Activated CD4-positive, alpha-beta T cell treated with anti-CD3 and anti-CD28 coated beads for 36 hours (primary cell): ENCODE measurements at regions of chr9 and their contacts with region 1.

Region 1: GRCh38 chr9:128927731-128928411 is 7.1 kb downstream of the PHYHD1 start:
- DNase-seq: peak; percentile 73
- ATAC-seq: peak; percentile 81
- H3K4me3 Mint-ChIP-seq: no peak overlapping the region
- H3K27ac Mint-ChIP-seq: peak overlapping the region; percentile 6
- H3K4me1 Mint-ChIP-seq: peaks cover 9% of the 10 kb centered on the region
- H3K27me3 Mint-ChIP-seq: no peaks in the 10 kb centered on the region

Region 2: DNA sequence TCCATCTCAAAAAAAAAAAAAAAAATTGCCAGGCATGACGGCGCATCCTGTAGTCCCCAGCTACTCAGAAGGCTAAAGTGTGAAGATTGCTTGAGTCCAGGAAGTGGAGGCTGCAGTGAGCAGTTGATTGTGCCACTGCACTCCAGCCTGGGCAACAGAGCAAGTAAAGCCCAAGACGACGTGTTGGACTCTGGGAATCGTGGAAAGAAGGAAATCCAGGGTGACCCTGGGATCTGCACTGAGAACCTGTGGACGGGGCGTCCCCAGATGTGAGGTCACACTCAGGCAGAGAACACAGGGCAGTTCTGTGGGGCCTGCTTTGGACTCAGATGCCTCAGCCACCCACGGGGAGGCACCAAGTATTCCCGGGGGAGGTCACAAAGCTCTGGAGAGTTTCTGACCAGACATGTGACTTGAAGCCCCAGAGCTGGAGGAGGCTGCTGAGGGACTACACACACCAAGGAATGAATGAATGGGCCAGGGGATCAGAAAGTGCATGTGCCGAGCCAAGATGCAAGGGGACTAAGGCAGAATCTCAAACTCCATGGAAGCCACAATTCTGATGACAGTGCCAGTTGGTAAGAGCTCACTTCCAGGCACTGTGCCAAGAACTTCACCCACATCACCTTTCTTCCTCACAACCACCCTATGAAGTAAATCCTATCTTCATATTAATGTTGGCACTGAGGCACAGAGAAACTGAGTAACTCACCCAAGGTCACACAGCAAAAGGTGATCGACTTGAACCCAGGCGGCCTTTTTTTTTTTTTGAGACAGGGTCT is 284.2 kb before region 1 on chr9:
- CTCF ChIA-PET with region 1: interaction called, 3 read pairs
- POLR2A ChIA-PET with region 1: no interaction called
- intact Hi-C with region 1: loop called (anchors 1 to 5 kb)
- DNase-seq: no peak
- ATAC-seq: no peak
- H3K4me3 Mint-ChIP-seq: no peak overlapping the region
- H3K27ac Mint-ChIP-seq: no peak overlapping the region
- H3K4me1 Mint-ChIP-seq: no peaks in the 10 kb centered on the region
- H3K27me3 Mint-ChIP-seq: no peaks in the 10 kb centered on the region

Region 3: DNA sequence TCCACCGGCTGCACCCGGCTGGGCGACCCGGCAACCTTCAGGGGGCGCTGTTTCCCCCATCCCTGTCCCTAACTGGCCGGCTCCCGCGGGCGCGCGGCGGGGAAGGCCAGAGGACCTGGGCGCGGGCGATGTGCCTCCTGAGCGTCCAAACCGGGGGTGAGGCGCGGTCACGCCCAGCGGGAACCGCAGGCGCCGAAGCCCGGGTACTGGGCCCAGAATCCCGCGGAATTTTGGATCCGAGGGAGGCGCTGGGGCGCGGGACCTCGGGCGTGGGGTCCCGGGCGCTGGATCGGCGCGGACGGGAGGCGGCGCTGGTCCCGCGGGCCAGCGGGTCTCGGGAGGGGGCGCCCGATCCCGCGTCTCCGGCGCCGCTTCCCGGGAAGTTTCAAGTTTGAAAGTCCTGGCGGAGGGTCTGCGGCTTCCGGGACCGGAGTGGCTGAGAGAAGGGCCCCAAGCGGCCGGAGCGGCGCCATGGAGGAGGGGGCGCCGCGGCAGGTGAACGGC is 225.4 kb before region 1 on chr9 and contains the start of gene PKN3:
- CTCF ChIA-PET with region 1: interaction called, 3 read pairs
- POLR2A ChIA-PET with region 1: no interaction called
- intact Hi-C with region 1: loop called in 1 of 2 experiments (anchors 2 kb)
- DNase-seq: peak; percentile 95
- ATAC-seq: peak; percentile 85
- H3K4me3 Mint-ChIP-seq: peak within 1 kb of the TSS; percentile 73
- H3K27ac Mint-ChIP-seq: peak within 1 kb of the TSS; percentile 74
- H3K4me1 Mint-ChIP-seq: peaks cover 10% of the 10 kb centered on the region
- H3K27me3 Mint-ChIP-seq: no peaks in the 10 kb centered on the region
- total RNA-seq, gene PKN3: 14.6 to 14.9 TPM

Region 4: DNA sequence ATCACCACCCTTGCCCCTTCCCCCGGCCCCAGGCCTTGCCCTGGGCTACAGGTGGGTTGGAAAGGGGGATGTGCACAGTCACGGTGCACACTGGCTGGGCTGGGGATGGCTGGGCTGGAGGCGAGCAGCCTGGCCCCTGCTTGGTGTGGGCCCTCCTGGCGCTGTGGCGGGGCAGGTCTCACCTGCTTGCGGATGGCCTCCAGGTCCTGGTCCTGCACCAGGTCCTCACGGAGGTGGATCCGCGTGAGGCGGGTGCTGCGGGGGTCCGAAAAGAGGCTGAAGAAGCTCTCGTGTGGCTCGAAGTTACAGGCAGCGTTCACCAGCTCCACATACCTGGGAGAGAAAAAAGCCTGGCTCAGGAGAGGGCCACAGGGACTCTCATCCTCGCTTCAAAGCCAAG is 174.2 kb before region 1 on chr9:
- CTCF ChIA-PET with region 1: no interaction called
- POLR2A ChIA-PET with region 1: no interaction called
- intact Hi-C with region 1: no loop called
- DNase-seq: no peak
- ATAC-seq: no peak
- H3K4me3 Mint-ChIP-seq: no peak overlapping the region
- H3K27ac Mint-ChIP-seq: no peak overlapping the region
- H3K4me1 Mint-ChIP-seq: peaks cover 3% of the 10 kb centered on the region
- H3K27me3 Mint-ChIP-seq: no peaks in the 10 kb centered on the region

Region 5: GRCh38 chr9:128846680-128847030 is 81.2 kb before region 1 on chr9:
- CTCF ChIA-PET with region 1: interaction called, 10 read pairs
- POLR2A ChIA-PET with region 1: no interaction called
- intact Hi-C with region 1: no loop called
- DNase-seq: no peak
- ATAC-seq: no peak
- H3K4me3 Mint-ChIP-seq: no peak overlapping the region
- H3K27ac Mint-ChIP-seq: no peak overlapping the region
- H3K4me1 Mint-ChIP-seq: no peaks in the 10 kb centered on the region
- H3K27me3 Mint-ChIP-seq: no peaks in the 10 kb centered on the region

Region 6: DNA sequence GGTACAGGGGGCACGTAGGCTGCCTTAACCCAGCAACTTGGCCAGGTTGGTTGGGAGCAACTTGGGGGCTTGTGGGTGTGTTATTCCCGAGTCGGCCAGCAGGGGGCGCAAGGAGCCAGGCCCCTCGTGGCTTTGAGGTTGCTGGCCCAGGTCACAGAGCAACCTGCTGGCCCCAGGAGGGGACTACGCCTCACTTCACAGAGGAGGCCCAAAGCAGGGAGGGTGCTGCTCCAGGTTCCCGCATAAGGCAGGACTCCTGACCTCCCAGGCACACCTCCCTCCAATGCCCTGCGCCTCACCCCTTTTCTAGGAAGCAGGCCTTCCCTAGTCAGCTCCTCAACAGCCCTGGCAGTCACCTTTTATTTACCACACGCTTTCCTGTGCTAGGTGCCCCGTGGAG is 64.2 kb before region 1 on chr9:
- CTCF ChIA-PET with region 1: interaction called, 86 read pairs
- POLR2A ChIA-PET with region 1: no interaction called
- intact Hi-C with region 1: loop called (anchors 1 kb)
- DNase-seq: peak; percentile 93
- ATAC-seq: peak; percentile 98
- H3K4me3 Mint-ChIP-seq: no peak overlapping the region
- H3K27ac Mint-ChIP-seq: no peak overlapping the region
- H3K4me1 Mint-ChIP-seq: peaks cover 5% of the 10 kb centered on the region
- H3K27me3 Mint-ChIP-seq: no peaks in the 10 kb centered on the region